GM12878 (cell line): ENCODE measurements at regions of chr15 and their contacts with region 1.

Region 1: GRCh38 chr15:74768771-74769342 is 13.0 kb upstream of the CSK start:
- DNase-seq: no peak
- ATAC-seq: peak; percentile 58
- H3K4me3 ChIP-seq: no peak overlapping the region
- H3K27ac ChIP-seq: no peak overlapping the region
- H3K4me1 ChIP-seq: peaks cover 12% of the 10 kb centered on the region
- H3K27me3 ChIP-seq: no peaks in the 10 kb centered on the region
- CTCF ChIP-seq: peak; percentile 76 to 84 (median 76)
- EP300 ChIP-seq: no peak
- POLR2A ChIP-seq: no peak
- RAD21 ChIP-seq: peak; percentile 91

Region 2: DNA sequence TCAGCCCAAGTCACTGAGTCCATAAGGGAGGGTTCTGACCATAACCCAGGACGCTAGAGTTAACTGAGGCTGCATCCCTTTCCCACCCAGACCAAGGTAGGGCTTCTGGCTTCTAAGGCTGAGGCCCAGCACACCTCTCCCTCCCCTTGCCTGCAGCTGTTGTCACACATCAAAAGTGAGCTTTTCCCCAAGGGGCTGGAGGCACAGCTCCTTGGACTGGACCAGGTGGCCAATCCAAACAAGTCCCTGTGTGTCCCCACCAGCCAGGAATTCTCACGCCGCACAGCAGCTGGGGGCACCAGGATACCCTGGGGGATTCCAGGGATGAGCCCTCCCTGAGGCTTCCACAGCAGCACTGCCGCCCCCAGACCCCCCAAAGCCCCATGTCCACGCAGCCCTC is 660.7 kb before region 1 on chr15:
- CTCF ChIA-PET with region 1: no interaction called
- POLR2A ChIA-PET with region 1: no interaction called
- RAD21 ChIA-PET with region 1: no interaction called
- SMC1A ChIA-PET with region 1: no interaction called
- in situ Hi-C with region 1: no loop called
- intact Hi-C with region 1: no loop called
- DNase-seq: no peak
- ATAC-seq: no peak
- H3K4me3 ChIP-seq: no peak overlapping the region
- H3K27ac ChIP-seq: no peak overlapping the region
- H3K4me1 ChIP-seq: no peaks in the 10 kb centered on the region
- H3K27me3 ChIP-seq: no peaks in the 10 kb centered on the region
- CTCF ChIP-seq: no peak
- EP300 ChIP-seq: no peak
- POLR2A ChIP-seq: no peak
- RAD21 ChIP-seq: no peak

Region 3: GRCh38 chr15:74208901-74209559 is 559.8 kb before region 1 on chr15:
- CTCF ChIA-PET with region 1: no interaction called
- POLR2A ChIA-PET with region 1: no interaction called
- RAD21 ChIA-PET with region 1: no interaction called
- SMC1A ChIA-PET with region 1: no interaction called
- in situ Hi-C with region 1: no loop called
- intact Hi-C with region 1: no loop called
- DNase-seq: no peak
- ATAC-seq: peak; percentile 12; the same call in 1 of the 3 replicates
- H3K4me3 ChIP-seq: no peak overlapping the region
- H3K27ac ChIP-seq: no peak overlapping the region
- H3K4me1 ChIP-seq: peaks cover 40% of the 10 kb centered on the region
- H3K27me3 ChIP-seq: no peaks in the 10 kb centered on the region; a peak in 1 of 4 replicates
- CTCF ChIP-seq: no peak
- EP300 ChIP-seq: no peak
- POLR2A ChIP-seq: no peak
- RAD21 ChIP-seq: no peak

Region 4: GRCh38 chr15:74758736-74759135 is 10.1 kb before region 1 on chr15:
- CTCF ChIA-PET with region 1: interaction called, 17 read pairs
- POLR2A ChIA-PET with region 1: no interaction called
- RAD21 ChIA-PET with region 1: interaction called, 3 read pairs
- SMC1A ChIA-PET with region 1: interaction called, 15 read pairs
- in situ Hi-C with region 1: no loop called
- intact Hi-C with region 1: no loop called
- DNase-seq: no peak
- ATAC-seq: no peak
- H3K4me3 ChIP-seq: no peak overlapping the region
- H3K27ac ChIP-seq: no peak overlapping the region
- H3K4me1 ChIP-seq: 0 out of 2 replicates have a peak, but pooled peaks cover 3% of the 10 kb centered on the region
- H3K27me3 ChIP-seq: no peaks in the 10 kb centered on the region
- CTCF ChIP-seq: no peak
- EP300 ChIP-seq: no peak
- POLR2A ChIP-seq: no peak
- RAD21 ChIP-seq: no peak

Region 5: DNA sequence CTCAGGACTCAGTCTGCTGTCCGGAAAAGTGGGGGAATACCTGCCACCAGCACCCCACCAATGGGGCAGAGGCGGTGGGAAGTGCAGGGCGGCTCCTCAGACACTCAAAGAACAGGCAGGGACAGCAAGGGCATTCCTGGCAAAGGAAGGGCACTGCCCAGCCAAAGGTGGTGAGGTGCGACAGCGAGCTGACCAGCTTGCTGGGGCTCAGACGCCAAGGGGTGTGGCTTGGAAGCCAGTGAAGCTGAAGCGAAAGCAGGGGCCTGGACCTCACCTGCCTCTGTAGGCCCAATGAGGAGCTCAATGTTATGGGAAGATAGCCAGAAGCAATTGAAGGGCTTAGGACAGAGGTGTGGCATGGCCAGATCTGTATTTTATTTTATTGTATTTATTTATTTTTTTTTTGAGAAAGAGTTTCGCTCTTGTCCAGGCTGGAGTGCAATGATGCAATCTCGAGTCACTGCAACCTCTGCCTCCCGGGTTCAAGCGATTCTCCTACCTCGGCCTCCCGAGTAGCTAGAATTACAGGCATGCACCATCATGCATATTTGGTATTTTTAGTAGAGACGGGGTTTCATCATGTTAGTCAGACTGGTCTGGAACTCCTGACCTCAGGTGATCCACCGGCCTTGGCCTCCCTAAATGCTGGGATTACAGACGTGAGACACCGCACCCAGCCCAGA is 39.4 kb after region 1 on chr15:
- CTCF ChIA-PET with region 1: interaction called, 21 read pairs
- POLR2A ChIA-PET with region 1: interaction called, 5 read pairs
- RAD21 ChIA-PET with region 1: interaction called, 28 read pairs
- SMC1A ChIA-PET with region 1: interaction called, 4 read pairs
- in situ Hi-C with region 1: no loop called
- intact Hi-C with region 1: no loop called
- DNase-seq: no peak
- ATAC-seq: peak; percentile 51
- H3K4me3 ChIP-seq: no peak overlapping the region
- H3K27ac ChIP-seq: no peak overlapping the region
- H3K4me1 ChIP-seq: no peaks in the 10 kb centered on the region
- H3K27me3 ChIP-seq: no peaks in the 10 kb centered on the region
- CTCF ChIP-seq: no peak
- EP300 ChIP-seq: no peak
- POLR2A ChIP-seq: peak; percentile 57; the same call in 1 of the 2 replicates
- RAD21 ChIP-seq: no peak

Region 6: DNA sequence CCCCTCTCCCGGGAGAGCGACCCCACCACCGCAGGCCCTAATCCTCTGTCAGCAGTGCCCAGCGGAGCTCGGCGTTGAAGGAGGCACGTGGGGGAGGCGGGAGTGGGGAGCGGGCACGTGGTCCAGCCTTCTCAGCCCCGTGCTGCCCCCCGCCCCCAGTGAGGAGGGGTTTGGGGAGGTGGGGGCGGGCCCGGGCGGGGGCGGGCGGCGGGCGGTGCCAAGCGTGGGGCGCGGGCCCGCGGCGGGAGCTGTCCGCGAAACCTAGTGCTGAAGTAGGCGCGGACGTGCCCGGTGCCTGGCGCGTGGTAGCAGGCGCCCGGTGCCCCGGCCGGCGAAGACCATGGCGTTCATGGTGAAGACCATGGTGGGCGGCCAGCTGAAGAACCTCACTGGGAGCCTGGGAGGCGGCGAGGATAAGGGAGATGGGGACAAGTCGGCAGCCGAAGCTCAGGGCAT is 57.5 kb after region 1 on chr15 and contains the start of gene CPLX3:
- CTCF ChIA-PET with region 1: interaction called, 53 read pairs
- POLR2A ChIA-PET with region 1: no interaction called
- RAD21 ChIA-PET with region 1: interaction called, 7 read pairs
- SMC1A ChIA-PET with region 1: interaction called, 9 read pairs
- in situ Hi-C with region 1: no loop called
- intact Hi-C with region 1: no loop called
- DNase-seq: no peak
- ATAC-seq: peak; percentile 60
- H3K4me3 ChIP-seq: no peak within 1 kb of the TSS
- H3K27ac ChIP-seq: no peak within 1 kb of the TSS
- H3K4me1 ChIP-seq: peaks cover 5% of the 10 kb centered on the region
- H3K27me3 ChIP-seq: peaks cover 0 to 16% of the 10 kb centered on the region in 2 experiments; a peak in 3 of 4 replicates
- CTCF ChIP-seq: no peak
- EP300 ChIP-seq: no peak
- POLR2A ChIP-seq: no peak
- RAD21 ChIP-seq: no peak
- polyA plus RNA-seq, gene CPLX3: 0.02 TPM in 1 of 2 experiments, not detected in the other

Region 7: DNA sequence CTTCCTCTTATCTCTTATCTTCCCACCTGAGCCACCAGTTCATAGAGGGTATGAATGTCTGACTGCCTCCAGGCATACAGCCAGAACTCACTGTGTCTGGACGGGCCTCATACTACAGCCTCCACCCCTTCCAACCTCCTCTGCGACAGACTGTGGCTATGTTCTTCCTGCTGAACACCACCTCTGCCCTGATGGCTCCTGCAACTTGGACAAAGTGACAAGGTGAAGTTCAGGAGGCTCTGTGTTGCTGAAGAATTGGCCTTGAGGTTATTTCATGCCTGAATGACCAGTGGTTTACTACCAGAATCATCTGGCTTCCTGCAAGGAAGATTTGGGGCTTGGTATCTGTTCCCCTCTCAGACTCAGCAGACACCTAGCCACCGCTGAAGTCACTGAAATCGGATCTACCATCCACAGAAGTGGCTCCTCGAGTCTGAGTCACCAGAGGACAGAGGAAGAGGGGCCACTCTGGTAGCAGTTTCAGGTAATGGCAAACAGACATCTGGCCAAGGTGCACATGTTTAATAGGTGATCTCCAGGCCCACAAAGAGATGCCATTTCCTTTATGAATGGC is 88.3 kb after region 1 on chr15:
- CTCF ChIA-PET with region 1: interaction called, 7 read pairs
- POLR2A ChIA-PET with region 1: no interaction called
- RAD21 ChIA-PET with region 1: interaction called, 4 read pairs
- SMC1A ChIA-PET with region 1: interaction called, 11 read pairs
- in situ Hi-C with region 1: no loop called
- intact Hi-C with region 1: no loop called
- DNase-seq: peak; percentile 78
- ATAC-seq: peak; percentile 91
- H3K4me3 ChIP-seq: peak overlapping the region; percentile 35; the same call in 1 of the 2 replicates
- H3K27ac ChIP-seq: peak overlapping the region; percentile 80
- H3K4me1 ChIP-seq: peaks cover 46% of the 10 kb centered on the region
- H3K27me3 ChIP-seq: no peaks in the 10 kb centered on the region
- CTCF ChIP-seq: no peak
- EP300 ChIP-seq: no peak
- POLR2A ChIP-seq: peak; percentile 35
- RAD21 ChIP-seq: no peak

Region 8: GRCh38 chr15:74956648-74957300 is 187.9 kb after region 1 on chr15 and contains the start of gene RPP25:
- CTCF ChIA-PET with region 1: interaction called, 117 read pairs
- POLR2A ChIA-PET with region 1: no interaction called
- RAD21 ChIA-PET with region 1: interaction called, 50 read pairs
- SMC1A ChIA-PET with region 1: interaction called, 82 read pairs
- in situ Hi-C with region 1: no loop called
- intact Hi-C with region 1: no loop called
- DNase-seq: no peak
- ATAC-seq: peak; percentile 94
- H3K4me3 ChIP-seq: peak within 1 kb of the TSS; percentile 65
- H3K27ac ChIP-seq: no peak within 1 kb of the TSS
- H3K4me1 ChIP-seq: peaks cover 30% of the 10 kb centered on the region
- H3K27me3 ChIP-seq: peaks cover 8 to 17% of the 10 kb centered on the region in 2 experiments
- CTCF ChIP-seq: no peak
- EP300 ChIP-seq: no peak
- POLR2A ChIP-seq: peak; percentile 76
- RAD21 ChIP-seq: no peak
- polyA plus RNA-seq, gene RPP25: 0.63 to 1.8 TPM